Mammary epithelial cell (primary cell): ENCODE measurements at regions of chr4 and their contacts with region 1.

Region 1: GRCh38 chr4:155186972-155187371 is 21.5 kb upstream of the NPY2R start:
- DNase-seq: no peak
- H3K4me3 ChIP-seq: no peak overlapping the region
- H3K27ac ChIP-seq: no peak overlapping the region
- H3K4me1 ChIP-seq: no peaks in the 10 kb centered on the region
- H3K27me3 ChIP-seq: peaks cover 2% of the 10 kb centered on the region
- CTCF ChIP-seq: no peak

Region 2: GRCh38 chr4:155220025-155220424 is 33.1 kb after region 1 on chr4:
- CTCF ChIA-PET with region 1: no interaction called
- dilution Hi-C with region 1: no loop called
- in situ Hi-C with region 1: no loop called
- intact Hi-C with region 1: loop called (anchors 1 kb)
- DNase-seq: no peak
- H3K4me3 ChIP-seq: no peak overlapping the region
- H3K27ac ChIP-seq: no peak overlapping the region
- H3K4me1 ChIP-seq: no peaks in the 10 kb centered on the region
- H3K27me3 ChIP-seq: no peaks in the 10 kb centered on the region
- CTCF ChIP-seq: no peak